ENCODE measurements at regions of chr14 and their contacts with region 1.

Region 1: GRCh38 chr14:77897374-77897773 is 97.5 kb downstream of the ADCK1 start:
- DNase-seq: no peak

Region 2: DNA sequence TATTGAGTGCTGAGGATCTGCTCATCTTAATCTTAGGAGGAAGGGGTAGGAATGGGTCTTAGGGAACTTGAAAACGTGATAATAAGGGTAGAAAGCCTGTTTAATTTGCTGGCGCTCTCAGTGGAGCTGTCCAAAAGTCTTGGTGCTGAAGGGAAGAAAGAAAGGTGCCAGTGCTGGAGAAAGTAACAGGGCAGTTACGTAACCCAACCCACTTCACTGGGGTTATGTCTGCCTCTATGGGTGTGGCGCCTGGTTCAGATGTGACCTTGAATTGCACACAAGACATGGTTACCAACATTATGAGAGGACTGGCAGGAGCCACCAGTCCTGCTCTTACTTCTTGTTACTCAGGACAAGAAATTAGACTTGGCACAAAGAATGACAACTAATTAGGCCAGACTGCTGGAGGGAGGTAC is 1764.3 kb before region 1 on chr14:
- intact Hi-C with region 1: loop called in 1 of 2 experiments (anchors 5 kb)
- DNase-seq: no peak

Region 3: DNA sequence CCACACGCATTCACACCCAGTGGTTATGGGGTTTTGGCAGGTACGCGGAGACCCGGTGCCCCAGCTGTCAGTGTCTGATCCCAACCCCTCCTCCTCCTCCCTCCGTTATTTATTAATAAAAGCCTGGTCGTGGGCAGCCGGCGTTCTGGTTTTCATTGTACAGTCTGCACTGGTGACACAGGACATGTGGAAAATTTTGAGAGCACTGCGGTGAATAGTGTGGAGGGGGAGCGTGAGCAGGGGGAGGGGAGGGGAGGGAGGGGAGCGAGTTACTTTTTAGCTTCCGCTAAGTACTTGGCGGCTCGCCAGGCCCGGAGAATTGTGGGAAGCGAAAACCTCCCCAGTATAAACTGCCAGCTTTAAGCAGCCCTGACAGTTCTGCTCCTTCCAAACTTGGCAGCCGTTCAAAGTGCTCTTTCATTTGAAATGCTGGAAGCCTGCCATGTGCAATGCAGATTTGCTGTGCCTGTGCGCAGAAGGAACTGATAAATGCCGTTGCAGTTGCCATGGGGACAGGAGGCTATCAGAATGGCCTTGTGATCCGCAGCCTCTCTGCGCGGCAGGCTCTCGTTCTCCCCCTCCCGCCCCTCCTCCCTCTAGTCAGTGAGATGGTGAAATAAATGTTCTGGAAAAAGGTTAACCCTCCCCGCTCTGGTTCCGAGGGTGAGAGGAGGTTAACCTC is 857.2 kb before region 1 on chr14:
- intact Hi-C with region 1: no loop called
- DNase-seq: peak; percentile 100

Region 4: GRCh38 chr14:77681196-77682157 is 215.9 kb before region 1 on chr14:
- intact Hi-C with region 1: no loop called
- DNase-seq: no peak

Region 5: GRCh38 chr14:77707355-77707723 is 190.0 kb before region 1 on chr14:
- intact Hi-C with region 1: no loop called
- DNase-seq: no peak

Region 6: DNA sequence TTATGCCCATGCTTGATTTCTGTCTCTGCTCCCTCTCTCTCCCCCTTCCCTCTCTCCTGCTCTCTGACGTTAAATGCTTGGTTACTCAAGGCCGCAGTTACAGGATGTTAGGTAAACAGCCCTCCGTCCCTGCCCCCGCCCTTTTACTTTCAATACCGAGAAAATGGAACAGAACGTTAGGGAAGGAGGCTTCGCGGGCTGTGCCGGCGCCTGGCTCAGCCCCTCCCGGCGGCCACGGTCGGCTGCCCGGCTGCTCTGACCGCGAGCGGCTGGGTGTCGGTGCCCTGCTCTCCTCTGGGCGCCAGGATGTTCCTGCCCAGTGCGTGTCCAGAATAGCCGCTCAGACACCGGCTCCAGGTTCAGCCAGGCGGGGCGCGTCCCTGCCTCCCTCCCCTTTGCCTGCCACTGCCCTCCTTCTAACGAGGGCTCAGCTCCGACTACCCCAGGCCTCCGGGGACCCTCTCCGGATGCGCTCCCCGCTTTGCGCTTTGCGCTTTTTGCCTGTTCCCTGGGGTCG is 68.6 kb after region 1 on chr14:
- intact Hi-C with region 1: no loop called
- DNase-seq: no peak